GM10248 (cell line): ENCODE measurements at regions of chr19 and their contacts with region 1.

Region 1: DNA sequence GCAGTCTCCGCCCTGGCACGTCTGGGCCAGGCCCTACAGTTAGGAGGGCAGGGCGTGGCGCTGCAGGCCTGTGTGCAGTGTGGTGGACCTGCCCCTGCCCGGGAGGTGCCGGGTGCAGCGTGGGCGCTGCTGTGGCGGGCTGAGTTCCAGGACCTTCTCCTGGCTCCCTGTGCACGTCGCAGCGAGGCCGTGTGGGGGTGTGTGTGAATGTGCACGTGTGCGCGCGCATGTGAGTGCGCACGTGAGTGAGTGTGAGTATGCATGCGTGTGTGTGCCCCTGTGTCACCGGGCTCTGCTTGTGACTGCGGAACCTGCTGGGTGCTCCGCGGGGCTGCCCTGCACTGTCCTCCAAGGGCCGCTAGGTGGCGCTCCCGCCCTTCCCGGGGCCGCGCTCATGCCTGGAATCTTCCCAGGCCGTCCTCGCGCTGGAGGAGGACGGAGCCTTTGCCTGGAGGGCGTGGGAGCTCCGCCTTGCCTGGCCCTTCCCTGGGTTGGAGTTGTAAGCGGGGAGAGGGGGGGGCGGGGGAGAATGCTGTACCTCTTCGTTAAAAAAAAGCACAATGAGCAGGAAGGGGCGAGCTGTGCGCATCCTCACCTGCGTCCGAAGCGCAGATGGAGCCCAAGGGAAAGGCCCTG is 79.3 kb downstream of the KDM4B start:
- DNase-seq: peak; percentile 86
- CTCF ChIP-seq: peak; percentile 90

Region 2: DNA sequence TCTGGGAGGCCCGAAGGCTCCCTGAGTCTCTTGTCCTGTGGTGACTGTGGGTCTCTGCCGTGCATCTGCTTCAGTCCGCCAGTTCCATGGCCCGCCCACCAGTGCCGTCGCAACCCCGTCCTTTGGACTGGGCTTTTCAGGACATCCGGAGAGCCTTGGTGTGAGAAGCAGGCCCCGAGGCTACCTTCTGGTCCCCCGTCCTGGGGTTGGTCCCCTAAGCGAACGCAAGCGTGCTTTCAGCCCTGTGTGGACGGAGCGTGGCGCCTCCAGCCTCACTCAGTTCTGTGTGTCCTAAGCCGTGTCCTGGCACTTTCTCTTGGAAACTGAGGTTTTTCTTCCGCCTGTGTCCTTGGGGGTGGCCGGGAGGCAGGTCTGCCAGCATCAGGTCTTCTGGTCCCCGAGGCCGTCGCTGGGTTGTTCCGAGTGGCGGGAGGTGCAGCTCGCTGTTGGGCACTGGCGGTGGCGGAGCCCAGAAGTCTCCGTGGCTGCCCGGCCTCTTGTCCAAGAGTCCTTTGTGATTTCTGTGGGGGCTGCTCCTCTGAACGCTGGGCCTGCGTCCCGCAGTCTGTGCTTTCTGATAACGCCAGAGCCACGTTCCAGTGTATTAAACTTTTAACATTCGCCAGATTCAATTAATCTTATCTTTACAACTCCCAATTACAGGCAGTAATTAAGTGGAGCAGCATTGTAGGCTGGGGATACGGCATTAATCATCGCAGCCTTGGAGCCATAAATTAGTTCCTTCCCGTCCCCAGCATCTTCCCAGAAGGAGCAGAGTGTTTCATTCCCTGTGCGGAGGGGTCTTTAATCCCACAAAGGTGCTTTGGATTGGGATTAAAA is 20.2 kb after region 1 on chr19:
- CTCF ChIA-PET with region 1: interaction called, 12 read pairs
- POLR2A ChIA-PET with region 1: no interaction called
- DNase-seq: no peak
- CTCF ChIP-seq: no peak

Region 3: GRCh38 chr19:5200844-5201243 is 152.6 kb after region 1 on chr19:
- CTCF ChIA-PET with region 1: no interaction called
- POLR2A ChIA-PET with region 1: no interaction called
- DNase-seq: no peak
- CTCF ChIP-seq: no peak

Region 4: DNA sequence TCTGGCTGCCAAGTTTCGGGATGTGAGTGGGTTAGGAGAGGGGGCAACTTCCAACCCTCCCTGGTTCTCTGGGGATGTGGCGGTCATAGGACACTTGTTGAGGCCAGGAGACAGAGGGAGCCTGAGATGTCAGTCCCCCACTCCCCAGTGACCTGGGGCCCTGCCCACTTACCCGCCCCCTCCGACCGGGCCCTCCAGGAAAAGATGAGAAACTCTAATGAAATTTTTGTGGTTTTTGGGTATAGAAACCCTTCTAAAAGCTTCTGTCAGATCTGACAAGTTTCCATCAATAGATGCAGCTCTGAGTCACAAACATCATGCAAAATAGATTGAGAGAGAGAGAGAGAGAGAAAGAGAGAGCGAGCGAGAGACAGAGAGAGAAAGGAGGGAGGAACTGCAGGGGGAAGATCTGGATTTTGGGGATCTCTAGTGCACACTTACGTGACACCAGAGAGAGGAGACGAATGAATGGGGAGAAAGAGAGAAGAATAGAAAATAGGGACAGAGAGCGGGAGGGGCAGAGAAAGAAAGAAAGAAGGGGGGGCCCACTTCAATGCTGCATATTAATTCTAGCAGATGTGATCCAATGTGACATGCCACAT is 198.4 kb after region 1 on chr19:
- CTCF ChIA-PET with region 1: no interaction called
- POLR2A ChIA-PET with region 1: no interaction called
- DNase-seq: no peak
- CTCF ChIP-seq: no peak